Sigmoid colon (tissue), 7 donors: ENCODE measurements at regions of chr3 and their contacts with region 1.

Region 1: GRCh38 chr3:27632431-27633223 is 89.5 kb downstream of the EOMES start:
- DNase-seq: peak; percentile 79
- H3K4me3 ChIP-seq: peak overlapping the region; percentile 43 to 59 (median 58)
- H3K27ac ChIP-seq: peak overlapping the region; percentile 85 to 87 (median 86)
- H3K4me1 ChIP-seq: peaks cover 0 to 9% (median 0%) of the 10 kb centered on the region in 4 donors
- H3K27me3 ChIP-seq: no peaks in the 10 kb centered on the region
- CTCF ChIP-seq: no peak
- EP300 ChIP-seq: no peak
- POLR2A ChIP-seq: no peak

Region 2: GRCh38 chr3:27392950-27393679 is 239.5 kb before region 1 on chr3:
- intact Hi-C with region 1: no loop called
- DNase-seq: no peak
- H3K4me3 ChIP-seq: no peak overlapping the region
- H3K27ac ChIP-seq: peak overlapping the region in 2 of 4 donors; percentile 44 to 49
- H3K4me1 ChIP-seq: peaks cover 0 to 18% (median 3%) of the 10 kb centered on the region in 4 donors
- H3K27me3 ChIP-seq: no peaks in the 10 kb centered on the region
- CTCF ChIP-seq: no peak
- EP300 ChIP-seq: no peak
- POLR2A ChIP-seq: no peak

Region 3: DNA sequence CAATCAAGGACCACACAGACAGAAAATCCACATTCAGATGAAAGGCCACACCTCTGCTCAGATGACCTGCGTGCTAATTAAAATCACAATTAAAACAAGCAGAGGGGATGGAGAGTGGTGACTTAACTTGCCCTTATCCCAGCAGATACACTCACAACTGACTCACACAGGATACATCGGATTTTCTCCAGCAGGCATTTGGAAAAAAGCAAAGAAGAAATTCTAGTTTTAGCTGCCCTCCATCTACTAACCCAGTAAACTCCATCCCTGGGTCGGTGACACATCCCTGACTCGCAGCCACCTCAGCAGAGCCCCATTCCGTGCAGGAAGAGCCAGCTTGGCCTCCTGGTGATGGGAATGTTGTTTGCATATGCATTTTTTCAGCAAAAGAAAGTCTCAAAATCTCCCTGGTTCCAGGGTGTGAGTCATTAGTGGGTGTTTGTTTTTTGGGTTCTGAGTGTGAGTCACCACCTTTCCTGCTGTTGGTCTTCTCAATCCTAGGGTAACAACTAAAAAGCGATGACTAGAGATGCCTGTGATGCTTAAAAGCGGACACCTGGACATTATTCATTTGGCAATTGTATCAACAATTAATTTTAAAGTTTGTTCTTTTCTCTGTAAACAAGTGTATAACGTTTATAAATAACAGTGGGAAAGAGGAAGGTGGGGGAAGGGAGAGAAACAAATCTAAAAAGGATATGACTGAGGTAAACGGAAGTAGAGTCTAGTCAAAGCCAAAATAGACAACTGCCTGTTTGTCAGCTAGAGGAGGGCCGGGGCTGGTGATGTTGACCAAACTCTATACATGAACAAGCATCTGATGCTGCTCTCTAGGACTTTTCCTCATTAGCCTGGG is 98.7 kb before region 1 on chr3:
- intact Hi-C with region 1: loop called (anchors 5 kb)
- DNase-seq: peak; percentile 85
- H3K4me3 ChIP-seq: no peak overlapping the region
- H3K27ac ChIP-seq: peak overlapping the region; percentile 65 to 83 (median 76)
- H3K4me1 ChIP-seq: peaks cover 0 to 52% (median 33%) of the 10 kb centered on the region in 4 donors
- H3K27me3 ChIP-seq: no peaks in the 10 kb centered on the region
- CTCF ChIP-seq: peak; percentile 20 to 45 (median 26)
- EP300 ChIP-seq: no peak
- POLR2A ChIP-seq: no peak

Region 4: GRCh38 chr3:27568393-27568792 is 64.2 kb before region 1 on chr3:
- intact Hi-C with region 1: loop called (anchors 5 kb)
- DNase-seq: peak; percentile 95
- H3K4me3 ChIP-seq: peak overlapping the region in 1 of 4 donors; percentile 3
- H3K27ac ChIP-seq: peak overlapping the region in 3 of 4 donors; percentile 74 to 83 (median 83)
- H3K4me1 ChIP-seq: peaks cover 0 to 46% (median 42%) of the 10 kb centered on the region in 4 donors
- H3K27me3 ChIP-seq: no peaks in the 10 kb centered on the region
- CTCF ChIP-seq: no peak
- EP300 ChIP-seq: peak; percentile 64 to 83 (median 76)
- POLR2A ChIP-seq: no peak

Region 5: GRCh38 chr3:27590437-27591298 is 42.0 kb before region 1 on chr3:
- intact Hi-C with region 1: loop called (anchors 5 kb)
- DNase-seq: no peak
- H3K4me3 ChIP-seq: no peak overlapping the region
- H3K27ac ChIP-seq: peak overlapping the region; percentile 66 to 70 (median 70)
- H3K4me1 ChIP-seq: peaks cover 0 to 39% (median 36%) of the 10 kb centered on the region in 4 donors
- H3K27me3 ChIP-seq: no peaks in the 10 kb centered on the region
- CTCF ChIP-seq: no peak
- EP300 ChIP-seq: no peak
- POLR2A ChIP-seq: no peak